ENCODE measurements at regions of chr12 and their contacts with region 1.

Region 1: GRCh38 chr12:52285172-52285745 is 6.1 kb downstream of the KRT81 start:
- H3K4me3 ChIP-seq: no peak overlapping the region
- H3K27ac ChIP-seq: no peak overlapping the region
- H3K4me1 ChIP-seq: no peaks in the 10 kb centered on the region
- CTCF ChIP-seq: no peak

Region 2: DNA sequence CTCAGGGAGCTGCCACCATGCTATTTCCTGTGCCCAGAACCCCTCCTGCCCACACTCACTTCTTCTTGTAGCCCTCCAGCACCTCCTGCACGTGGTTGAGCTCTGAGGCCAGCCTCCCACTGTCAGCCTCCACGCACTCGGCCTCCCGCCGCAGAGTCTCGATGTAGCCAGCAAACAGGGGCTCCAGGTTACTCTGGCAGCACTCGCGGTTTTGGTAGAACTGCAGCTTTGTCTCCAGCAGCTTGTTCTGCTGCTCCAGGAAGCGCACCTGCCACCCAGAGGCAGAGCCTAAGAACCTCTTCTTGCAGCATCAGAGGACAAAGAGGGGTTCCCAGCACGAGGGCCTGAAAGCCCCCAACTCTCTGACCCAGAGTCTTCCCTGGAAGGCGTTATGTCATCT is 33.8 kb after region 1 on chr12:
- CTCF ChIA-PET with region 1: interaction called, 12 read pairs
- POLR2A ChIA-PET with region 1: interaction called, 5 read pairs
- H3K4me3 ChIP-seq: no peak overlapping the region
- H3K27ac ChIP-seq: no peak overlapping the region
- H3K4me1 ChIP-seq: no peaks in the 10 kb centered on the region
- CTCF ChIP-seq: no peak

Region 3: GRCh38 chr12:52346593-52346992 is 61.3 kb after region 1 on chr12:
- CTCF ChIA-PET with region 1: no interaction called
- POLR2A ChIA-PET with region 1: no interaction called
- H3K4me3 ChIP-seq: no peak overlapping the region
- H3K27ac ChIP-seq: no peak overlapping the region
- H3K4me1 ChIP-seq: peaks cover 3% of the 10 kb centered on the region; the same call in 1 of the 2 replicates
- CTCF ChIP-seq: no peak

Region 4: GRCh38 chr12:52363111-52363679 is 77.9 kb after region 1 on chr12:
- CTCF ChIA-PET with region 1: no interaction called
- POLR2A ChIA-PET with region 1: no interaction called
- H3K4me3 ChIP-seq: no peak overlapping the region
- H3K27ac ChIP-seq: no peak overlapping the region
- H3K4me1 ChIP-seq: no peaks in the 10 kb centered on the region
- CTCF ChIP-seq: no peak

Region 5: GRCh38 chr12:52423661-52424500 is 138.6 kb after region 1 on chr12:
- CTCF ChIA-PET with region 1: no interaction called
- POLR2A ChIA-PET with region 1: no interaction called
- H3K4me3 ChIP-seq: no peak overlapping the region
- H3K27ac ChIP-seq: no peak overlapping the region
- H3K4me1 ChIP-seq: no peaks in the 10 kb centered on the region
- CTCF ChIP-seq: no peak